ENCODE measurements at regions of chr6 and their contacts with region 1.

Region 1: DNA sequence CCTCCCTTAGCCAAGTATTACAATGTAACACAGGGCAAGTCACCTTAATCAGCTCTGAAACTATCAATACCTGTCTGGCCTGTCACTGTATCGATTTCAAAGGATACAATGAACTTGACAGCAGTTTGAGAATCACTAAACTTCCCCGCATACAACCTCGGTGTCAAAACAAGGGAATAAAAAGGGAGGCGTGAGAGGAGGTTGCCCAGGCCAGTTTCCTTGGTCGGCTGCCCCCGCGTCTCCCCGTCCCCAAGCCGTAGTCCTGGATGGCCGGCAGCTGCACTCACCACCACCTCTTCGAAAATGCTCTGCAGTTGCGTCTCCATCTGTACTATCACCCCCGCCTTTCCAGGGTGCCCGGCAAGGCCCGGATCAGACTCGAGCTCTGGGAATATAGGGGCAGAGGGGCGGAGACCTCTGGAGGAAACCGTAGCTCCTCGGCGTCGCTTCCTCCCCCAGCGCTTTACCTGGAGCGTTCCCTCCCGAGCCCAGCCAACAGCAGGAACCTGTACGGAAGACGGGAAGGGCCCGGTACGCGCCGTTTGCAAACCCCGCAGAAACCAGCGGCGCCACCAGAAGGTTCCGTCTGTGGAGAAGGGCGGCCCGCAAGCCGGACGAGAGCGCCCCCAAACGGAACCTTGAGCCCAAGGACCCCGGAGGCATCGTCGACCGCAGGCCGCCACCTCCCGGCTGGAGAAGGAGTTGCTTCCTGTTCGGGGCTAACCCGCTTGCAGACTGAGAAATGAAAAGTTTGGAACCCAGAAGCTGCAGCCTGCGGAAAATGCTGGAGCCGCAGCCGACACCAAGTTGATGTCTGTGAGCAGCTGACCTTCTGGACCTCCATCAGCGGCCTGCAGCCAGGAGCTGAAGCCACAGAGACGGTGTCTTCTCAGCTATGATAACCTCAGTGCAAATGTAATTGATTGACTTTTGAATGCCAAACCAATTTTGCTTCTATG is at the start of gene MED23:
- H3K4me3 ChIP-seq: peak within 1 kb of the TSS; percentile 74
- H3K27ac ChIP-seq: peak within 1 kb of the TSS; percentile 75
- H3K4me1 ChIP-seq: 0 out of 2 replicates have a peak, but pooled peaks cover 4% of the 10 kb centered on the region
- CTCF ChIP-seq: peak; percentile 100

Region 2: DNA sequence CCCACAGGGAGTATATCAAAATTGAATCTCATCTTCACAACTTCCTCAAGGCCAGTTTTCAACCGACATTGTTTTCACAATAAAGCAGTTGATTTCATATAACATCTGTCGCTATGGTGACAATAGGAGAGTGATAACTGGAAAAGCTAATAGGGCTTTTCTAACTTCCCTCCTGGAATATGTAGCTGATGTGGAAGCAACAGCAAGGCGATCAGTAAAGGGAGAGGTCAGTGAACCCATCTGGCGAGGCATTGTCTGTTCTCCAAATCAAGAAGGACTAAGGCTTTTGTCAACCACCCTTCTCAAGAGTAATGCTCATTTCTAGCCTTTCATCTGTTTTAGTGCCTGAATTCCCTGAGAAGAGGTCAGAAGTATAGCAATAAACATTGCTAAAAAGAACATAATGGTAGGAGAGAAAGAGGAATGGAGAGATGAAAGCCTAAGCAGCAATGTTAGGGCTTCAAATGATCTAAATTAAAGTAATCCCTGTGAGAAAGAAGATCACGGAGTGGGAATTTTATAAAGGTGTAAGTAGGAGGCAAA is 291.4 kb before region 1 on chr6:
- CTCF ChIA-PET with region 1: no interaction called
- POLR2A ChIA-PET with region 1: no interaction called
- H3K4me3 ChIP-seq: no peak overlapping the region
- H3K27ac ChIP-seq: no peak overlapping the region
- H3K4me1 ChIP-seq: 0 out of 2 replicates have a peak, but pooled peaks cover 4% of the 10 kb centered on the region
- CTCF ChIP-seq: no peak

Region 3: DNA sequence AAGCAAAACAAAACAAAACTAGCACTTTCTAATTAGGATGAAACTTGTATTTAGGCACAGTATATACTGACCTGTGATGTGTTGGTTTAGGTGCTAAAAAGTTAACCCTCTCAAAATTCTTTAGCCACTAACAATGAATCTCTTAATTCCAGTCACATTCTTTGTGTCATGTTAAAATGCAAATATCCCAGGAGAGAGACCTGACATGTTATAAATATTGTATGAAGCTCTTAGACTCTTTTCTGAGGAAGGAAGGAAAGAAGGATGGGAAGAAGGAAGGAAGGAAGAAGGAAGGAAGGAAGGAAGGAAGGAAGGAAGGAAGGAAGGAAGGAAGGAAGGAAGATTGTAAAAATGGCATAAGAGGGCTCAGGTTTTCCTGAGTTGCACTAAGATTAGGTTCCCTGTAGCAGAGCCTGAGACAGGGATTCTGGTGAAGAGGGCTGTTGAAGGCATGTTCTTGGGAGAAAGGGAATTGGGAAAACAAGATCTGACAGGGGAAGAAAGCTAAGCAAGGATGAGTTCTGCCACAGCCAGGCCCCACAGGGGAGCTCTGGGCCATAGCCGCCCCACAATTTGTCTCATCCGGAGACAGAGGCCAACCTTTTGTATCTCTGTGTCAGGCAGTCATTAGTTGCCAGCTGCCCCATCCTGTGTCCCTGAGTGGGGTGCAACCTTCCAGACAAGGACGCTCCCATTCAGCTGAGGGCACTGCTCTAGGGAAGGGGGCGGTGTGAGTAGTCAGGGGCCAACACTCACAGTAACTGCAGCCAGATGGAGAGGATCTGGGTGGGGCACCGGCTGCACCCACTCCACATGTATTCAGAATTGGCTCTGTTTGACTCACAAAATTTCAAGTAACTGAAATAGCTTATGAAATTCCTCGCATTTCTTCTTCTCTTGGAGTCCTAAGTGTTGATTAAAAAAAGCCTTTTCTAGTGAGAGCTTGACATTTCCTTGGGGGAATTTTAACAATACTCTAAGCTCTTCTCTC is 244.3 kb before region 1 on chr6:
- CTCF ChIA-PET with region 1: no interaction called
- POLR2A ChIA-PET with region 1: no interaction called
- H3K4me3 ChIP-seq: no peak overlapping the region
- H3K27ac ChIP-seq: no peak overlapping the region
- H3K4me1 ChIP-seq: no peaks in the 10 kb centered on the region
- CTCF ChIP-seq: no peak

Region 4: DNA sequence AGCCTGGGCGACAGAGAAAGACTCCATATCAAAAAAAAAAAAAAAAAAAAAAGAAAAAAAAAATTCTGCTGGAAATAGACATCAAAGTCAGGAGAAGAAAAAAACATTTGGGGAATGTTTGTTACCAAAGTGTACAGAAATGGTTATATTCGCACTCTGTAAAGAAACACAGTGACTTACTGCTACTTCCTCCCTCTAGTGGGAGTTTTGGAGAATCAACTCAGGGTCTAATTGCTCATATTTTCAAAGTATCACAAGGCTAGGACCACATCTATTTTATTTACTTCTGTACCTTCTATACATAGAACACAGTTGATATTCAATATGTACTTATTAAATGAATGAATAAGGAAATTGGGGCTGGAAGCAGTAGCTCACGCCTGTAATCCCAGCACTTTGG is 30.6 kb before region 1 on chr6:
- CTCF ChIA-PET with region 1: interaction called, 21 read pairs
- POLR2A ChIA-PET with region 1: no interaction called
- H3K4me3 ChIP-seq: no peak overlapping the region
- H3K27ac ChIP-seq: no peak overlapping the region
- H3K4me1 ChIP-seq: no peaks in the 10 kb centered on the region
- CTCF ChIP-seq: no peak; the same call in 1 of the 2 replicates

Region 5: DNA sequence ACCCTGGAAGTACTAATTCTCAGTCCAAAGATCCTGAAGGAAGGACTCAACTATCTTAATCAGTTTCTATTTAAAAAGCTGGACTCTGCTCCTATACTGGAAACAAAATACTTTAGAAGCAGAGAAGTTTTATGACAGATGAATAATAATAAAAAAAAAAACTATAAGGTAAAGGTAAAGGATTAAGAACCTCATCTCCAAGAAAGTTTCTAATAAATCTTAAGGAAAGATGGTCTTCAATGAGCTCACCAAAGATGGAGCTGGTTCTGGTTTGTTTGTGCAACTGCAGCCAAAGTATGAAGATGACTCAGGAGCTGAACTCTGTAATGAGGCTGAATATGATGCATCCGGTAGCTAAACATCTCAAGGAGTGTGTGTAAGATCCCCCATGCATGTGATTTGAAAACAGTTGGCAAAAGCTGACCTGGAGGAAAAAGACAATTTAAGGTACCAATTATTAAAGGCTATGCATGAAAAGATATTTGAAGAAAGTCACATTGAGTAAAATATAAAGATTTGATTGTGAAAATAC is 25.2 kb before region 1 on chr6:
- CTCF ChIA-PET with region 1: interaction called, 20 read pairs
- POLR2A ChIA-PET with region 1: no interaction called
- H3K4me3 ChIP-seq: no peak overlapping the region
- H3K27ac ChIP-seq: no peak overlapping the region
- H3K4me1 ChIP-seq: no peaks in the 10 kb centered on the region
- CTCF ChIP-seq: no peak

Region 6: DNA sequence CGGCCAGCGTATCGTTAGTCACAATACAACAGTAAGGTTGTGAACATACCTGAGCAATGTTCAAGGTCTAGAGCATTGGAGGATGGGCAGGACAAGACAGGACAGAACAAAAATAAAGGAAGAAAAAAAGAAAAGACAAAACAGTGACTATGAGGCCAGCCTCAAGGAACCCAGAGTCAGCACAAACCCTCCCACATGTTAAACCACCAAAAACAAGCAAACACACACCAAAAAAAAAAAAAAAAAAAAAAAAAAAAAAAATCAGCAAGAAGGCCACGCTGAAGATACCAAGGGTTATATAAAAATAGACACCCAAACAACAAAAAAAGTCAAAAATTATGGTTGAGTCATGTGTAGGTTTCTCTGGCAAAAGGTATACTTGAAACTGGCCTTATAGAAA is 12.7 kb before region 1 on chr6:
- CTCF ChIA-PET with region 1: interaction called, 63 read pairs
- POLR2A ChIA-PET with region 1: interaction called, 9 read pairs
- H3K4me3 ChIP-seq: no peak overlapping the region
- H3K27ac ChIP-seq: no peak overlapping the region
- H3K4me1 ChIP-seq: no peaks in the 10 kb centered on the region
- CTCF ChIP-seq: no peak

Region 7: GRCh38 chr6:131652472-131652871 is 24.5 kb after region 1 on chr6:
- CTCF ChIA-PET with region 1: interaction called, 55 read pairs
- POLR2A ChIA-PET with region 1: interaction called, 3 read pairs
- H3K4me3 ChIP-seq: no peak overlapping the region
- H3K27ac ChIP-seq: no peak overlapping the region
- H3K4me1 ChIP-seq: no peaks in the 10 kb centered on the region
- CTCF ChIP-seq: no peak

Region 8: GRCh38 chr6:131657630-131658111 is 29.7 kb after region 1 on chr6:
- CTCF ChIA-PET with region 1: interaction called, 55 read pairs
- POLR2A ChIA-PET with region 1: no interaction called
- H3K4me3 ChIP-seq: no peak overlapping the region
- H3K27ac ChIP-seq: no peak overlapping the region
- H3K4me1 ChIP-seq: no peaks in the 10 kb centered on the region
- CTCF ChIP-seq: no peak

Region 9: GRCh38 chr6:131669891-131670290 is 41.9 kb after region 1 on chr6:
- CTCF ChIA-PET with region 1: interaction called, 10 read pairs
- POLR2A ChIA-PET with region 1: no interaction called
- H3K4me3 ChIP-seq: no peak overlapping the region
- H3K27ac ChIP-seq: no peak overlapping the region
- H3K4me1 ChIP-seq: no peaks in the 10 kb centered on the region
- CTCF ChIP-seq: no peak

Measured in HEK293 (cell line).